Ovary (tissue), 10 donors: ENCODE measurements at regions of chr12 and their contacts with region 1.

Region 1: DNA sequence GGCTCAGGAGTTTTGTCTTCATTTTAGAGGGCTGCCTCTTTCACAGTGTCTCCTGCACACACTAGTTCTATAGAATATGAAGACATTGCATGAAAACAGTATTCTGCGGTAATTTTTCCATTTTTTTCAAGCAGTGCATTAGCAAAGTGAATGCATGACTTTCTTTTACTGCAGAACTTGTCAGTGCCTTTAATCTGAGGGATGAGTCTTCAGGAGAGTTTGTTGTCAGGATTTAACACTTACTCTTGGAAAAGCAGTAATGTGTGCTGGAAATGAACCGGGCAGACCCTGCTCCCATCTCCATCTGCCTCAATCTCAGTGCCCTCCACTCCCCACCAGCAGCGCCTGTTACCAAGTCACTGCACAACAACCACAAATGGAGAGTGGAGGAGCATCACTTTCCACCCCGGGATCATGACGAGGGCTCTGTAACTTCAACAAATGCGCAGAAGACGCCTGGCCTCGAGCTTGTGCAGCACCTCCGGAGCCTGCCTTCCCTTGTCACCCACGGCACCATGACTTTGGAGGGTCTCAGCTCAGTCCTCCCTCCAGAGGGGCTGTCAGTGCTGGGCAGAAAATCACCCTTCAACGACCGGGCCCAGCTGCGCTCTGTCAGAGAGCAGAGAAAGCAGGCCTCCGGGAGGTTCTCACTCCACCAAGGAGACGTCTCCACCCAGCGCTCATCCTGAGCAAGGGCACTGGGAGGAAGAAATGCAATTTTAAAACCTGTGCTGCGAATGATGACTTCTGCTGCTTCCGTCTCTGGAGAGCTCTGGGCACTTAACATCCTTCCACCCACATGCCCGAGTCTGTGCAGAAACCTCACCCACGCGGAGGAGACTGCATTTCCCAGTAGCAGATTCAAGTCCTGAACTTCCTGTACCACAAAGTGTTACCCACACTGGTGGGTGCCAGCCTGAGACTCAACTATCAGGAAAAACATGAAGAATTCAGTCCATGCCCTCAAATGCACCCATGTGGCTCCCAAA is 255.7 kb downstream of the ADGRD1 start:
- DNase-seq: no peak
- H3K4me3 ChIP-seq: no peak overlapping the region
- H3K27ac ChIP-seq: no peak overlapping the region
- H3K4me1 ChIP-seq: no peaks in the 10 kb centered on the region
- H3K27me3 ChIP-seq: no peaks in the 10 kb centered on the region
- CTCF ChIP-seq: no peak
- EP300 ChIP-seq: no peak
- POLR2A ChIP-seq: no peak

Region 2: DNA sequence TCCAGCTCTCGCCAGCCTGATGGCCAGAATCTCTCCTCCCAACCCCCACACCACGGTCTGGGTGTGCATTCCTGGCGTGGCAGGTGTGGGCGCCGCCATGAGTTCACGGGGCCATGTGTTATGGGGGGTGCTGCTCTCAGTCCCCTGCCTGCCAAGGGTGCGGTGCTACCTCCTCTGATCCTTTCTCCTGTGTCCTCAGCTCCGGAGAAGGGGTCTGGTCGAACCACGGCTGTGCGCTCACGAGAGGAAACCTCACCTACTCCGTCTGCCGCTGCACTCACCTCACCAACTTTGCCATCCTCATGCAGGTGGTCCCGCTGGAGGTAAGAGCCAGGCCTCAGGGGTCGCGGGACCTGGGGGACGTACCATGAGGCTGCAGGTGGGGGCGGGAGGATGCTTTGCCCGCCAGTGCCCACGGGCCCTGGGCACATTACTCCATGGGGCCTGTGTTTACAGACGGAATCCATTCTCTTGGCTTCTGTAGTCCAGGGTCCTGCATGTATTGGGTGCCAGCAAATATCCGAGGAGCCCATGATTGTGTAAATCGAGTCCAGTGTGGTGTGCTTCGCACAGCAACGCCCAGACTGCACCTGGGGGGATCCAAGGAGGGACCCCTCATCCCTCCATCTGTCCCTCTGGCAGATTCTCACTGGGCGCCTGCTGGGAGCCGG is 124.9 kb before region 1 on chr12:
- intact Hi-C with region 1: no loop called
- DNase-seq: peak in 4 of 5 donors; percentile 6 to 12 (median 8)
- H3K4me3 ChIP-seq: no peak overlapping the region
- H3K27ac ChIP-seq: no peak overlapping the region
- H3K4me1 ChIP-seq: no peaks in the 10 kb centered on the region
- H3K27me3 ChIP-seq: no peaks in the 10 kb centered on the region
- CTCF ChIP-seq: no peak
- EP300 ChIP-seq: no peak
- POLR2A ChIP-seq: no peak

Region 3: DNA sequence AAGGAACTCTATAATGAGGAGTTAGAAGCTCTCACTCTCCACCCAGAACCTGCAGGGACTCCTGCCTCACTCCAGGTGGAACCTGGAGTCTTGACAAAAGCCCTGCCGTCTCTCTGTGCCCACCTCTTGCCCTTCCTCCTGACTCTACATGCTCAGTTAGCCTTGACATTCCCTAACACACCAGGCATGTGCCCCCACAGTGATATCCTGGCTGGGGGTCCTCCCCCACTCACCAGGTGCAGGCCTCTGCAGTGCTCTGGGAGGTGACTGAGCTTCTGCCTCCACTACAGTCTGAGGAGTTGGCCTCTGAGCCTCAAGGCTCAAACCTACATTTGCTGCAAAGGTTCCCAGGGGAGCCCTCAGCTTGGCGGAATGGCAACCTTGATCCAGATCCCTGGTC is 45.0 kb after region 1 on chr12:
- intact Hi-C with region 1: loop called in 1 of 4 experiments (anchors 2 kb)
- DNase-seq: no peak
- H3K4me3 ChIP-seq: no peak overlapping the region
- H3K27ac ChIP-seq: no peak overlapping the region
- H3K4me1 ChIP-seq: peaks cover 4% of the 10 kb centered on the region
- H3K27me3 ChIP-seq: no peaks in the 10 kb centered on the region
- CTCF ChIP-seq: no peak
- EP300 ChIP-seq: no peak
- POLR2A ChIP-seq: no peak

Region 4: DNA sequence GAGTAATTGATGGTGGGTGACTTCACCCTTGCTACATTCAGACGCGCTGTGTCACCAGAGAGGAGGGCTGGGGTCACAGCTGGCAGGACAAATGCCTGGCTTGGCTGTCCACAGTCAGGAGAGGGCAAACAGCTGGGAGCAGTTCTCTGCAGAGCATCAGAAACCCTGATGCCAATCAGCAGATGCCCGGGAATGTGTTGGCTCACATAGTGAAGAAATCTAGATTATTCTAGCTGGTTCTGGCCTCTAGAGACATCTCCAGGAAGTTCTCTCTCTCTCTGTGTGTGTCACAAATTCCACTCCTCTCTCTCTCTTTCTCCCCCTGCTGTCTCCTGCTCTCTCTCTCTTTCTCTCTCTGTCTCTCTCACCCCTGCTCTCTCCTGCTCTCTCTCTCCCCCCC is 75.7 kb after region 1 on chr12:
- intact Hi-C with region 1: no loop called
- DNase-seq: peak in 1 of 5 donors; percentile 1
- H3K4me3 ChIP-seq: no peak overlapping the region
- H3K27ac ChIP-seq: no peak overlapping the region
- H3K4me1 ChIP-seq: no peaks in the 10 kb centered on the region
- H3K27me3 ChIP-seq: no peaks in the 10 kb centered on the region
- CTCF ChIP-seq: no peak
- EP300 ChIP-seq: no peak
- POLR2A ChIP-seq: no peak

Region 5: DNA sequence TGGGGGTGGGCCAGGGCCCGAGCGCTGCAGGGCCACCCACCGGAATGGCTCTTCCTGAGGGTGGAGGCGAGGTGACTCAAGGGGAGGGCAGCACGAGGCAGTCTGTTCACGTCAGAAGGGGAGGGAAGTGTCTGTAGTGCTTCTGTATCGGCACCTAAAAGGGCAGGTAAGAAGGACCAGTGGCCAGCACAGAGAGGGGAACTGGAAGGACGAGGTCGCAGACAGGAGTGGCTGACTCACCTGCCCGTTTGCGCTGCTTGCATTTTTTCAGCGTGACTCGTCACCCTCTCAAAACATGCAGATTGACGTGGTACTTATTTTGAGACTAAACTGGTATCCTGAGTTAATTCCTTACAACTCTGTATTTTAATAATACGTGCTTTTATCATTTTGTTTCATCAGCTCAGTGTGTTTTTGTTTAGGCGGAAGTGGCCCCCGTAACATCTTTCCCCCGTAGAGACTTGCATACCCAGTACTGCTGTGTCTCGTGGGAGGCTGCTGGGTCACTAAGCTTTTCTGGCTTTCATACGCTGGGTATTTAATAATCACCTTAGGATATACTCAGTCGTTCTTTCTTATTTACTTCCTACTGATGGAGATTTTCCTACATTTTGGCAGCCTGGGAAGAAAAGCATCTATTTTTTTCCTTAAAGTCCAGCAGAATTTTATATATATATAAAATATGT is 527.9 kb after region 1 on chr12:
- intact Hi-C with region 1: no loop called
- DNase-seq: no peak
- H3K4me3 ChIP-seq: no peak overlapping the region
- H3K27ac ChIP-seq: no peak overlapping the region
- H3K4me1 ChIP-seq: no peaks in the 10 kb centered on the region
- H3K27me3 ChIP-seq: no peaks in the 10 kb centered on the region
- CTCF ChIP-seq: no peak
- EP300 ChIP-seq: no peak
- POLR2A ChIP-seq: no peak